Calu3 (cell line): ENCODE measurements at regions of chr17 and their contacts with region 1.

Region 1: GRCh38 chr17:74532115-74532514 is 840 bp upstream of the CD300LB start:
- DNase-seq: no peak
- H3K4me3 Mint-ChIP-seq: no peak overlapping the region
- H3K27ac Mint-ChIP-seq: no peak overlapping the region
- H3K4me1 Mint-ChIP-seq: no peaks in the 10 kb centered on the region
- H3K27me3 Mint-ChIP-seq: peaks cover 79% of the 10 kb centered on the region
- CTCF ChIP-seq: no peak

Region 2: DNA sequence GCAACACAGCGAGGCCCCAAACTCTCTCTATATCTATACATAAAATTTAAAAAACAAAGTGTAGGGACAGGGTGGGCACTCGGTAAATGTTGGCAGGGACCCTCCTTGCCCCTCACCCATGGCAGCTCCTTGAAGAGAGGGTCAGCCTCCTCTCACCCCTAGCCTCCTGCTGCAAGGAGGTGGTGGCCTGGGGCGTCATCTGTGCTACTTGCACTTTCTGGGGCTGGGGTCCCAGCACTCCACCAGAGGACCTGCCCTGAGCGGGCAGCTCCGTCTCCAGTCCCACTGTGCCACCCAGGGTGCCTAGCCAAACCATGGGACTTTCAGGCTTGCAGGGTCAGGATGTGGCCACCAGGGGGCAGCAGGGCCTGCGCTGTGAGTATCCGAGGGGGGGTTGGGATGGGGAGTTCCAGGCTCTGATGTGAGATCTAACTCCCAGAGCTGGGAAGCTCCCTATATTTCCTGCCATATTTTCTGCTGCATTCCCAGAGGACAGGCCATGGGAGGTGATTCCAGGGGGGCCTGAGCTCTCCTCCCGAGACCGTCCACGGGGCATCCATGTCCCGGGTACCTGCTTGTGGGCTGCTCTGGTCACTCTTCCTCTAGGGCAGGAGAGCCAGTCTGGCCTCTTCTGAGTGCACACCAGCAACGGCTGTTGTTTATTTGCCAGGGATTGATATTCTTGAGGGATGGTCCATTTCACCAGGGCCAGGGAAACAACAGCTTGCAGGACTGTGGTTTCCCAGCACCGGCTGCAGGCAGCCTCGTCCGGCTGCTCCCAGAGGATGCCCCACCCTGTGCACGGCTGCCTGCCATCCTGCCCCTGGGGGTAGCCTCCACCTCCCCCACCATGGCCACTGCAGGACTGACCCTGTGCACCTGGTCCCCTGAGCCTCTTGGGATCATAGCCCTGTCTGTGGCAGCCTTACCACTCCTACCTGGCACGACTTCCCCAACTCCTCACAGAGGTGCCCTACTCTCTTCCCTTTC is 163.7 kb before region 1 on chr17:
- CTCF ChIA-PET with region 1: interaction called, 16 read pairs
- intact Hi-C with region 1: no loop called
- DNase-seq: peak; percentile 77
- H3K4me3 Mint-ChIP-seq: no peak overlapping the region
- H3K27ac Mint-ChIP-seq: no peak overlapping the region
- H3K4me1 Mint-ChIP-seq: no peaks in the 10 kb centered on the region
- H3K27me3 Mint-ChIP-seq: peaks cover 67% of the 10 kb centered on the region
- CTCF ChIP-seq: peak; percentile 91